MCF 10A (cell line): ENCODE measurements at regions of chr18 and their contacts with region 1.

Region 1: GRCh38 chr18:61581578-61582201 is 248.5 kb downstream of the CDH20 start:
- DNase-seq: peak; percentile 60
- H3K4me3 Mint-ChIP-seq: peak overlapping the region; percentile 40
- H3K27ac Mint-ChIP-seq: no peak overlapping the region
- H3K4me1 Mint-ChIP-seq: peaks cover 25% of the 10 kb centered on the region
- H3K27me3 Mint-ChIP-seq: no peaks in the 10 kb centered on the region
- CTCF ChIP-seq: peak; percentile 97

Region 2: DNA sequence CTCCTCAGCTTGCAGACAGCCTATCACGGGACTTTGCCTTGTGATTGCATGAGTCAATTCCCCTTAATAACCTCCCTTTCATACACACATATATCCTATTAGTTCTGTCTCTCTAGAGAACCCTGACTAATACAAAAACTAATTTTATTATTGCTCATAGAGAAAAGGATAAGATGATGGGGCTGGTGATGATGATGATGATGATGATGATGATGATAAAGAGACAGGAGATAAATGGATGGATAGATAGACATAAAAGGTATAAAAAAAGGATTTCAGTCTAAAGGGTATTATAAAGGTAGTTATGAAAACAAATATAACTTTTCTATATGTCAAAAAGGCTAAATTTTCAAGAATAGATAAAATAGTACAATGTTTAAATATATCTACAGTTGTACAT is 477.9 kb before region 1 on chr18:
- CTCF ChIA-PET with region 1: no interaction called
- POLR2A ChIA-PET with region 1: no interaction called
- intact Hi-C with region 1: no loop called
- DNase-seq: no peak
- H3K4me3 Mint-ChIP-seq: no peak overlapping the region
- H3K27ac Mint-ChIP-seq: no peak overlapping the region
- H3K4me1 Mint-ChIP-seq: no peaks in the 10 kb centered on the region
- H3K27me3 Mint-ChIP-seq: no peaks in the 10 kb centered on the region
- CTCF ChIP-seq: no peak

Region 3: GRCh38 chr18:61443081-61443725 is 138.5 kb before region 1 on chr18:
- CTCF ChIA-PET with region 1: no interaction called
- POLR2A ChIA-PET with region 1: no interaction called
- intact Hi-C with region 1: no loop called
- DNase-seq: no peak
- H3K4me3 Mint-ChIP-seq: no peak overlapping the region
- H3K27ac Mint-ChIP-seq: no peak overlapping the region
- H3K4me1 Mint-ChIP-seq: no peaks in the 10 kb centered on the region
- H3K27me3 Mint-ChIP-seq: peaks cover 24% of the 10 kb centered on the region
- CTCF ChIP-seq: no peak

Region 4: DNA sequence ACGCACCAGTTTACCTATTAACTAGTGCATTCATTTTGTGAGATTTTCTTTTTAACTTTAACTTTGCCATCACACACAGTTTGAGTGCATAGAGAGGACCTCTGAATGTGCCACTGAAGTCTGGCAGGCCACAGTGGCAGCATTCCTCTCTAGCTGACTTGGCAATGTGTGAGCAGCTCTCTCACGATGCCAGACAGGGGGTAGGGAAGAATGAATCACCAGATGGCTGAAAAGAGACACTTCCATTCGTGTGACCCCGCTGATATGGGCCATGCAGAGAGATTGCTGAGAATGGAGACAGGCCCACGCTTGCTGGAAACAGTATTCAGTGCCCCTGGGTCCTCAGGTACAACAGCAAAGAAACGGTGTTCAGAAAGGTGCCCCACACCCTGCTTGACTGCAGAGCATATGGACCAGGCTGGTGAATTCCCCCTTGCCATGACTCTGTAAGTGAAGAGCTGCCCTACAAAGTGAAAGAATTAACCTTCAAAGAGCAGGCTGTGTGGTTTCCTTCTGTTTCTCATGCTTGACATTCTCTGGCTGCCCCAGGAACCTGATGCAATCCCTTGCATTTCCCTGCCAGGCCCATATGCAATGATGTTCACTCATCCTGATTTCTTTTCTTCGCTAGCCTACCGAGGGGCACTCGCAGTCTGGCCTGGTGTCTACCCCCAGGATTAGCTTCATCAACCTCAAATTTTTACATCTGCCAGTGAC is 12.4 kb before region 1 on chr18:
- CTCF ChIA-PET with region 1: interaction called, 51 read pairs
- POLR2A ChIA-PET with region 1: no interaction called
- intact Hi-C with region 1: no loop called
- DNase-seq: peak; percentile 72
- H3K4me3 Mint-ChIP-seq: no peak overlapping the region
- H3K27ac Mint-ChIP-seq: no peak overlapping the region
- H3K4me1 Mint-ChIP-seq: peaks cover 12% of the 10 kb centered on the region
- H3K27me3 Mint-ChIP-seq: no peaks in the 10 kb centered on the region
- CTCF ChIP-seq: no peak

Region 5: GRCh38 chr18:61628085-61628484 is 46.4 kb after region 1 on chr18:
- CTCF ChIA-PET with region 1: interaction called, 4 read pairs
- POLR2A ChIA-PET with region 1: interaction called, 4 read pairs
- intact Hi-C with region 1: loop called (anchors 2 kb)
- DNase-seq: peak; percentile 2
- H3K4me3 Mint-ChIP-seq: no peak overlapping the region
- H3K27ac Mint-ChIP-seq: no peak overlapping the region
- H3K4me1 Mint-ChIP-seq: peaks cover 5% of the 10 kb centered on the region
- H3K27me3 Mint-ChIP-seq: no peaks in the 10 kb centered on the region
- CTCF ChIP-seq: no peak

Region 6: GRCh38 chr18:61662726-61663125 is 81.0 kb after region 1 on chr18:
- CTCF ChIA-PET with region 1: no interaction called
- POLR2A ChIA-PET with region 1: no interaction called
- intact Hi-C with region 1: no loop called
- DNase-seq: no peak
- H3K4me3 Mint-ChIP-seq: no peak overlapping the region
- H3K27ac Mint-ChIP-seq: no peak overlapping the region
- H3K4me1 Mint-ChIP-seq: no peaks in the 10 kb centered on the region
- H3K27me3 Mint-ChIP-seq: no peaks in the 10 kb centered on the region
- CTCF ChIP-seq: no peak

Region 7: GRCh38 chr18:61893971-61894750 is 312.5 kb after region 1 on chr18:
- CTCF ChIA-PET with region 1: interaction called, 50 read pairs
- POLR2A ChIA-PET with region 1: interaction called, 9 read pairs
- intact Hi-C with region 1: loop called (anchors 5 kb)
- DNase-seq: peak; percentile 78
- H3K4me3 Mint-ChIP-seq: peak overlapping the region; percentile 74
- H3K27ac Mint-ChIP-seq: peak overlapping the region; percentile 74
- H3K4me1 Mint-ChIP-seq: peaks cover 36% of the 10 kb centered on the region
- H3K27me3 Mint-ChIP-seq: no peaks in the 10 kb centered on the region
- CTCF ChIP-seq: peak; percentile 27